Activated naive CD4-positive, alpha-beta T cell treated with anti-CD3 and anti-CD28 coated beads for 36 hours (primary cell): ENCODE measurements at regions of chr9 and their contacts with region 1.

Region 1: DNA sequence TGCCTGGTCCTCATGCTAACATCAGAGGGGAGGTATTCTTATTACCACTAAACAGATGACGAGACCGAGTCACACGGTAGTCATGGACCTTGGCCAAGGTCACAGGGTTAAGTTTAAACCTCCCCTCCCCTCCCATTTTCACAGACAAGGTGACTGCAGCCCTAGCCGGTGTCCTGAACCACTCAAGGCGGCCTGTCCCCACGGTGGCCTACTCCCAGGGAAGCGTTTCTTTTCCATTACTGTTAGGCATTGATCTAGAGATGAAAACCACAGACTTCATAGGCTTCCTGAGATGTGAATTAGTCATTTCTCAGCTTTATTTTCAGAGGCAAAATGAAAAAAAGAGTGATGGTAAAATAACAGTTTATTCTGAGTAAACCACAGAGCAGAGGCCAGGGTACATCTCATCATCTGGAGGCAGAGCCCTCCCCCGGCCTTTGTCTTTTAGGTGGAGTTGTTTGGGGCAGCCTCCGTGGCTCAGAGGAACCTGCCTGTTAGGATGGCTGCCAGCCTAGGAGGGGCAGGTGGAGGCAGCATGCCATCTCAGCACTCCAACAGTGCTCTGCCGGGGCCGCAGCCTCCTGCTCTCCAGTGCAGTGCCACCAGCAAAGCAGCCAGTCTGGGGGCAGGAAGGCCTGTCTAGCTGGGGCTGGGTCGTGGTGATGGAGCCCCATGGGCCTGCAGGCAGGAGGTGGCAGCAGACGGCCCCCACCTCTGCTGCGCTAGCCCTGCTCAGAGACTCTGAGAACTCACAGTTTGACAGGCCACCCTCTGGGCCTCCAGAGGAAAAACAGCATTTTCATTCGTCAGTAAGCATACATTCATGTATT is 71.2 kb downstream of the RAPGEF1 start:
- DNase-seq: peak; percentile 85
- H3K4me3 Mint-ChIP-seq: peak overlapping the region; percentile 60
- H3K27ac Mint-ChIP-seq: peak overlapping the region; percentile 100
- H3K4me1 Mint-ChIP-seq: peaks cover 79% of the 10 kb centered on the region
- H3K27me3 Mint-ChIP-seq: no peaks in the 10 kb centered on the region

Region 2: DNA sequence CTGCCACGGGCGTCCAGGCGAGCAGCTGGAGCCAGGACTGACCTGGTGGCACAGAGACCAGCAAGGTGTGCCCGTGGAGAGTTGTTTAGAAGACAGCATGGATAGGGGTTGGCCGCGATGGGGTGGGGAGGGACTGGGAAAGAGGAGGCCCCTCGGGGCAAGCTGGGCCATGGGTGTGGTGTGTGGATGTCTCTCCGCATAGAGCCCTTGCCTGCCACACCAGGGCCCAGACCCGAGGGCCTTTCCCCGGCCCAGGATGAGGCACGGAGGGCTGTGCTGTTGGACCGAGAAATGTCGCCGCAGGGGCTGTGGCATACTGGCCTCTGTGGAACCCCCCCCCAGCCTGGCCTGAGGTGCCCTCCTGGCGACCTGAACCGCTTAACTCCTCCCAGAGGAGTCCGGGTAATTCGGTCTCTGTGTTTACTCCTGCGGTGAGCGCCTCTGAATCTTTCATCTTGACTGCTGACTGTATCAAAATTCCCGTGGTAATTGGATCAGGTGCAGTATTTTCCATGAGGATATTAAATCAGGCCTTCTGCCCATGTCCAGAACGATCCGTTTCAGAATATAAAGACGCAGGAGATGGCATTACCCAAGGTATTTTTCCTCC is 682.2 kb before region 1 on chr9:
- CTCF ChIA-PET with region 1: no interaction called
- intact Hi-C with region 1: no loop called
- DNase-seq: no peak
- H3K4me3 Mint-ChIP-seq: no peak overlapping the region
- H3K27ac Mint-ChIP-seq: no peak overlapping the region
- H3K4me1 Mint-ChIP-seq: no peaks in the 10 kb centered on the region
- H3K27me3 Mint-ChIP-seq: no peaks in the 10 kb centered on the region

Region 3: GRCh38 chr9:131270171-131271015 is 398.3 kb before region 1 on chr9:
- CTCF ChIA-PET with region 1: no interaction called
- intact Hi-C with region 1: loop called (anchors 5 kb)
- DNase-seq: peak; percentile 81
- H3K4me3 Mint-ChIP-seq: peak overlapping the region; percentile 96
- H3K27ac Mint-ChIP-seq: peak overlapping the region; percentile 99
- H3K4me1 Mint-ChIP-seq: peaks cover 56% of the 10 kb centered on the region
- H3K27me3 Mint-ChIP-seq: no peaks in the 10 kb centered on the region

Region 4: DNA sequence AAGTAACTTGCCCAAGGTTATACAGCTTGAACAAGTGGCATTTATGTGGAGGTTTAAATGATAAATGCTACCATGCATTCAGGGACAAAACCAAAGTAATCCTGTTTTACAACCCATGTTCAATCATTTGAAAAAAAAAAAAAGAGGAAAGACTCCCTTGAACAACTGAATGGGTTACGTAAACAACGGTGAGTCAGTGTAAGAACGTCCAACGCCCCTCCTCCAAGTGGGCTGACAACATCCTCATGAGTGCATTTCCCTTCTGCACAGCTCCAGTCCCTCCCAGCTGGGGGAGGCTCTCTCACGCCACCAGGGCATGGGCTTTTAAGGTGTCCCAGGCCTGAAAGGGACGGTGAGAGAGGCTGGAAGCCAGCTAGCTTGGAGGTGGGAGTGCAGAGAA is 33.4 kb before region 1 on chr9:
- CTCF ChIA-PET with region 1: interaction called, 3 read pairs
- intact Hi-C with region 1: loop called (anchors 1 kb)
- DNase-seq: peak; percentile 92
- H3K4me3 Mint-ChIP-seq: no peak overlapping the region
- H3K27ac Mint-ChIP-seq: peak overlapping the region; percentile 89
- H3K4me1 Mint-ChIP-seq: peaks cover 37% of the 10 kb centered on the region
- H3K27me3 Mint-ChIP-seq: no peaks in the 10 kb centered on the region

Region 5: DNA sequence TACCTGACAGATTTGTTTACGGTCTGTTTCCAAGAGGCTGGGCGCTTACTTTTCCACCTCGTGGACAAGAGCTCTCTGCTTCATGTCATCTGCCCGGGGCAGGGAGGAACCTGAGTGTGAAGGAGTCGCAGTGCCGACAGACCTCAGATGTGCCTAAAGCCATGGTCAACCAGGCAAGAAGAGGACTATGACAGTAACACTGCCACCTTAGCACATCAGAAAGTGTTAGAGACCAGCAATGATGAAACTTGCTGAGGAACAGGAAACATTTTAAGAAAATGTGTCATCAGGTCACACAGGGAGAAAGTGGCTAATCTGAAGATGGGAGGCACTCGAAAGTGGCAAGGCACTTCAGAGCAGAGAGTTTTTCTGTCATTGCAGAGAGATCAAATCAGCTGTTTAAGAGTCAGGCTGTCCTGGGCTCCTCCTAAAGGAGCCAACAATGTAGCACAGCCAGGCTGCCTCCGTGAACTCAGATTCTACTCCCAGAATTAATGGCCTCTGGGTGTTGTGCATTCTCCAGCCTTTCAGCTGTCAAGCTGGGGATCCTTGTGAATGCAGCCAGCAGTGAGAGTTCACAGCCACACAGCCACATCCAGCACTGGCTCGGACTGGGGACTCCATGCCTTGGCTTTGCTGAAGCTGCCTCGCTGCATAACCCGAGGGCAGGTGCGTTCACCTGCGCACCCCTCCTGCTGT is 23.4 kb before region 1 on chr9:
- CTCF ChIA-PET with region 1: interaction called, 3 read pairs
- intact Hi-C with region 1: loop called (anchors 1 kb)
- DNase-seq: peak; percentile 47
- H3K4me3 Mint-ChIP-seq: no peak overlapping the region
- H3K27ac Mint-ChIP-seq: peak overlapping the region; percentile 68
- H3K4me1 Mint-ChIP-seq: peaks cover 52% of the 10 kb centered on the region
- H3K27me3 Mint-ChIP-seq: no peaks in the 10 kb centered on the region

Region 6: DNA sequence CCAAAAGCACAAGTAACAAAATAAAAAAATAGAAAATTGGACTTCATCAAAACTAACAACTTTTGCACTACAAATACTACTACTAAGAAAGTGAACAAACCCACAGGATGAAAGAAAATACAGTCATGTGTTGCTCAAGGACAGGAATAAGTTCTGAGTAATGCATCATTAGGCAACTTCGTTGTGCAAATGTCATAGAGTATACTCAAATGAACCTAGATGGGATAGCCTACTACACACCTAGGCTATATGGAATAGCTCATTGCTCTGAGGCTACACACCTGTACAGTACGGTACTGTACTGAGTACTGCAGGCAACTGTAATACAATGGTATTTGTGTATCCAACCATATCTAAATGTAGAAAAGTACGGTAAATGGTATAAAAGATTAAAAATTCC is 17.0 kb before region 1 on chr9:
- CTCF ChIA-PET with region 1: no interaction called
- intact Hi-C with region 1: loop called (anchors 1 kb)
- DNase-seq: peak; percentile 32
- H3K4me3 Mint-ChIP-seq: no peak overlapping the region
- H3K27ac Mint-ChIP-seq: peak overlapping the region; percentile 68
- H3K4me1 Mint-ChIP-seq: peaks cover 48% of the 10 kb centered on the region
- H3K27me3 Mint-ChIP-seq: no peaks in the 10 kb centered on the region

Region 7: DNA sequence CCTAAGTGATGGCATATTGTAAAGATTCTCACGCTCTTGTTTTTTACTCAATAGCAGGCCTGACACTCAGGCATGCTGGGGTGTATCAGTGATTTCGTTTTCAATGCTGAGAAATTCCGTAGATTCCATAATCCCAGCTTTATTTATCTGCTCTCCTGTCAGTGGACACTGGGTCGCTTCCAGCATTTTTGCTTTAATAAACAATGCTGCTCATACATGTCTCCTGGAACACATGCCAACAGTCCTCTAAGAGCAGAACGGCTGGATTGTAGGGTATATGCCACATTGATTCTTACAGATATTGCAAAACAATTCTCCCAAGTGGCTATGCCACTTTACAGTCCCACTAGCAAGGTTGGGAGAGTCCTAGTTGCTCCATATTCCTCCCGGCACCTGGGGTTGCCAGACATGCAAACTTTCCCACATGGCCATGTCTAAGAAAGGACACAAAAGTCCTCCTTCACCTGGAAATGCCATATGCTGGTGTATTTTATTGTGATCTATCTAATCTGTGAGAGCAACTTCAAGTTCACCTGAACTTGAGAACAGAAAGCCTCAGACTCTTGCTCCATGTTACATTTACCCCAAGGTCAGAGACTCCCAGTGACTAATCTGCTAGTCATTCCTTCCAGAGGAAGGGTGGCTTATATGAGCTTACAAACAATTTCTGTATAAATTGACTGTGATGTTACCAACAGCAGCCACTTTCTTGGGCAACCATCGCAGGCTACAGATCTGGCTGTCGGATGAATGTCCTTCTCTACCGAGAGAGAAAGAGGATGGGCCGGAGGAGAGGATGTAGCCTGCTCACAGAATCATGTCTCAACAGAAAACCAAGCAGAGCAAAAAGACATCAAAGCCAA is 10.5 kb before region 1 on chr9:
- CTCF ChIA-PET with region 1: no interaction called
- intact Hi-C with region 1: loop called (anchors 1 kb)
- DNase-seq: peak; percentile 66
- H3K4me3 Mint-ChIP-seq: peak overlapping the region; percentile 11
- H3K27ac Mint-ChIP-seq: peak overlapping the region; percentile 88
- H3K4me1 Mint-ChIP-seq: peaks cover 76% of the 10 kb centered on the region
- H3K27me3 Mint-ChIP-seq: no peaks in the 10 kb centered on the region

Region 8: DNA sequence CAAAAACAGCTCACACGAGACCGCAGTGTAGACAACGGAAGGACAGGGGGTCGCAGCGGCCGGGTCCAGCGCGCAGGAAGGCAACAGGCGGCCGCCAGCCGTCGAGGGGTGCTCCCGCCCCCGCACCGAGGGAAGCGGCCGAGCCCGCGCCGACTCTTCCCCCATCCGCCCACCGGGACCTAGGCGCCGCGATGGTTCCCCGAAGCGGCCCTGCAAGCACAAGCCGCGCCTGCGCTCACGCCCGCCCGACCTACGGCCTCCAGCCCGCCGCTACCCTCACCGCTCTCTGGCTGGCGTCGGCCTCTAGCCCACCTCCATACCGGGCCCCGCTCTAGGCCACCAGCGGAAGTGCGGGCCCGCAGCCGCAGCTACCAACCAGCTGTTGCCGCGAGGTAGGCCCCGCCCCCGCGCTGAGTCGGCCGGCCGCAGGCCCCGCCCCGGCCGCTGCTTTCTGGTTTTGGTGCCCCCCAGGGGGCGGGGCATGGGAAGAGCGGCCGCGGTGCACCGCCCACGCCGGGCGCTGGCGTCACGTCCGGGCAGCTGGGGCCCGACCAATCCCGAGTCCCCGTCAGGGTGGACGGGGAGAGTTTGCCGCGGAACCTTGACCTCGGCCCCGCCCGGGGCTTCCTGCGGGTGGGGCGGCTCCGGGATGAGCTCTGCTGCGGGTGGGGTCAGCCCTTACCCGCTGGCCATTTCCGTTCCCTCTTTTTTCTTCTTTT is 686.1 kb after region 1 on chr9 and contains the start of gene SETX:
- CTCF ChIA-PET with region 1: no interaction called
- intact Hi-C with region 1: loop called (anchors 5 kb)
- DNase-seq: peak; percentile 96
- H3K4me3 Mint-ChIP-seq: peak within 1 kb of the TSS; percentile 88
- H3K27ac Mint-ChIP-seq: peak within 1 kb of the TSS; percentile 95
- H3K4me1 Mint-ChIP-seq: peaks cover 35% of the 10 kb centered on the region
- H3K27me3 Mint-ChIP-seq: no peaks in the 10 kb centered on the region
- total RNA-seq, gene SETX: 26.4 to 26.7 TPM